ENCODE measurements at regions of chr19 and their contacts with region 1.

Region 1: GRCh38 chr19:12333162-12334159 is at the start of gene ZNF563:
- DNase-seq: peak; percentile 96 to 99 (median 98)
- ATAC-seq: peak; percentile 92
- H3K4me3 ChIP-seq: peak within 1 kb of the TSS; percentile 86
- H3K4me3 Mint-ChIP-seq: peak within 1 kb of the TSS; percentile 100
- H3K27ac ChIP-seq: peak within 1 kb of the TSS; percentile 84 to 90
- H3K27ac Mint-ChIP-seq: peak within 1 kb of the TSS; percentile 96
- H3K4me1 ChIP-seq: peaks cover 25% of the 10 kb centered on the region
- H3K4me1 Mint-ChIP-seq: peaks cover 47% of the 10 kb centered on the region
- H3K27me3 ChIP-seq: no peaks in the 10 kb centered on the region
- H3K27me3 Mint-ChIP-seq: no peaks in the 10 kb centered on the region
- CTCF ChIP-seq: no peak
- total RNA-seq, gene ZNF563: 4.5 to 5.1 TPM

Region 2: DNA sequence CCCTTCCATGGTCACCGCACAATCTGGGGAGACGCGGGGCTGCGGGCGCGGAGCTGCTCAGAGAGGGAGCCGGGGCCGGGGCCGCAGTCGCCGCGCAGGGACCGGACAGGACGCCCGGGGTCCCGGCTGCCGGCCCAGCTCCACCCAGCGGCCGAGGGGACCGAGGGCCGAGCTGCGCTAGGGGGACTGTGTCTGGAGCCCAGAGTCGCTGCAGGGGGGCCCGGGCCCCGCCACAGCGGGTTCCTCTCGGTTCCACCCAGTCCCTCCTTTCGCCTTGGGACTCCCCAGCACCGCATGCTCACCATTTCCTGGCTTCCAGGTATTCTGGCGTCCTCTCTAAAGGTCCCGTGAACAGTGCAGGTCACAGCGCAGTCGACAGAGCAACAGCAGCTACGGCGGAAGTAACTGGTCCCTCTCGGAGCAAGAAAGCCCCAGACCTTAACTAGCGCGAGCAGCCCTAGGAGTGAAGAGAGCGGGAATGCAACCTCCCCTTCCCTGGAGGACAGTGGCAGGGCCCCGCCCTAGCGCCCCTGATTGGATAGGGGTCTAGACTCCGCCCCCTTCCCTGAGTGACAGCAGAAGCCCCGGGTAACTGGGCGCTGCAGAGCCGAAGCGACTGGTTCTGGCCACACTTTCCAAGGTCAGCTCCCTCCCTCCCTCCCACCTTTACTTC is 280.8 kb before region 1 on chr19 and contains the start of gene ZNF878:
- CTCF ChIA-PET with region 1: no interaction called
- POLR2A ChIA-PET with region 1: no interaction called
- intact Hi-C with region 1: no loop called
- DNase-seq: peak in 12 of 14 experiments; percentile 15 to 68 (median 30)
- ATAC-seq: peak; percentile 71
- H3K4me3 ChIP-seq: peak within 1 kb of the TSS; percentile 60
- H3K4me3 Mint-ChIP-seq: peak within 1 kb of the TSS; percentile 90
- H3K27ac ChIP-seq: no peak within 1 kb of the TSS
- H3K27ac Mint-ChIP-seq: no peak within 1 kb of the TSS
- H3K4me1 ChIP-seq: peaks cover 16% of the 10 kb centered on the region
- H3K4me1 Mint-ChIP-seq: peaks cover 17% of the 10 kb centered on the region
- H3K27me3 ChIP-seq: peaks cover 0 to 7% of the 10 kb centered on the region in 2 experiments
- H3K27me3 Mint-ChIP-seq: peaks cover 34% of the 10 kb centered on the region
- CTCF ChIP-seq: no peak
- total RNA-seq, gene ZNF878: not detected

Region 3: DNA sequence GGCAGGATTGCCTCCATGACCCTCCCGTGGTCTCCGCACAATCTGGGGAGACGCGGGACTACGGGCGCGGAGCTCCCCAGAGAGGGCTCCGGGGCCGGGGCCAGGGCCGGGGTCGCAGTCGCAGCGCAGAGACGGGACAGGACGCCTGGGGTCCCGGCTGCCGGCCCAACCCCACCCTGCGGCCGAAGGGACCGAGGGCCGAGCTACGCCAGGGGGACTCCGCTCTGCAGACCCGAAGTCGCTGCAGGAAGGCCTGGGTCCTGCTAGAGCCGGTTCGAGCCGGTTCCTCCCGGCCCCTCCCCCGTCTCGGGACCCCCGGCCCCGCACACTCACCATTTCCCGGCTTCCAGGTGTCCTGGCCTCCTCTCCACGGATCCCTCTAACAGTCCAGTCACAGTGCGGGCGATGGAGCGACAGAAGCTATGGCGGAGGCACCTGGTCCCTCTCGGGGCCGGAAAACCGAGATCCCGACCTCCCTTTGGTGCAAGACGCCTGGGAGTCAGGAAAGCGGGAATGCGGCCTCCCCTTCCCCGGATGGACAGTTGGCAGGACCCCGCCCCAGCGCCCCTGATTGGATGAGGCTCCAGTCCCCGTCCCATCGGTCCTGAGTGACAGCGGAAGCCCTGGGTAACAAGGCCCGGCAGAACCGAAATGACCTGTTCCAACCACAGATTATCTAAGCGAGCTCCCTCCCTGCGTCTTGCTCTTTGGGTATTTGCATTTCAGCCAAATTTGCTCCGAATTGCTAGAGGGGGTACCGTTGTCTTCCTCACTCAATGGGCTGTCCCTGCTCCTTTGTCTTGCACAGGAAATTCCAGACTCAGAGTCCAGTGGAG is 177.0 kb before region 1 on chr19 and contains the start of gene ZNF625:
- CTCF ChIA-PET with region 1: no interaction called
- POLR2A ChIA-PET with region 1: interaction called, 36 read pairs
- intact Hi-C with region 1: no loop called
- DNase-seq: peak in 5 of 14 experiments; percentile 22 to 40 (median 32)
- ATAC-seq: peak; percentile 37
- H3K4me3 ChIP-seq: peak within 1 kb of the TSS; percentile 64
- H3K4me3 Mint-ChIP-seq: peak within 1 kb of the TSS; percentile 82
- H3K27ac ChIP-seq: no peak within 1 kb of the TSS
- H3K27ac Mint-ChIP-seq: peak within 1 kb of the TSS; percentile 33
- H3K4me1 ChIP-seq: peaks cover 36% of the 10 kb centered on the region
- H3K4me1 Mint-ChIP-seq: peaks cover 23% of the 10 kb centered on the region
- H3K27me3 ChIP-seq: peaks cover 0 to 7% of the 10 kb centered on the region in 2 experiments
- H3K27me3 Mint-ChIP-seq: no peaks in the 10 kb centered on the region
- CTCF ChIP-seq: no peak
- total RNA-seq, gene ZNF625: 0.56 to 0.85 TPM

Region 4: GRCh38 chr19:12202250-12202649 is 131.2 kb before region 1 on chr19:
- CTCF ChIA-PET with region 1: no interaction called
- POLR2A ChIA-PET with region 1: no interaction called
- intact Hi-C with region 1: loop called (anchors 5 kb)
- DNase-seq: peak; percentile 44 to 79 (median 60)
- ATAC-seq: peak; percentile 91
- H3K4me3 ChIP-seq: no peak overlapping the region
- H3K4me3 Mint-ChIP-seq: peak overlapping the region; percentile 49
- H3K27ac ChIP-seq: no peak overlapping the region
- H3K27ac Mint-ChIP-seq: peak overlapping the region; percentile 51
- H3K4me1 ChIP-seq: peaks cover 15% of the 10 kb centered on the region
- H3K4me1 Mint-ChIP-seq: peaks cover 47% of the 10 kb centered on the region
- H3K27me3 ChIP-seq: no peaks in the 10 kb centered on the region
- H3K27me3 Mint-ChIP-seq: no peaks in the 10 kb centered on the region
- CTCF ChIP-seq: peak; percentile 71

Region 5: GRCh38 chr19:12237143-12237839 is 96.2 kb before region 1 on chr19:
- CTCF ChIA-PET with region 1: no interaction called
- POLR2A ChIA-PET with region 1: no interaction called
- intact Hi-C with region 1: no loop called
- DNase-seq: peak in 1 of 14 experiments; percentile 9
- ATAC-seq: no peak
- H3K4me3 ChIP-seq: no peak overlapping the region
- H3K4me3 Mint-ChIP-seq: no peak overlapping the region
- H3K27ac ChIP-seq: no peak overlapping the region
- H3K27ac Mint-ChIP-seq: no peak overlapping the region
- H3K4me1 ChIP-seq: no peaks in the 10 kb centered on the region
- H3K4me1 Mint-ChIP-seq: no peaks in the 10 kb centered on the region
- H3K27me3 ChIP-seq: no peaks in the 10 kb centered on the region
- H3K27me3 Mint-ChIP-seq: no peaks in the 10 kb centered on the region
- CTCF ChIP-seq: no peak

Region 6: DNA sequence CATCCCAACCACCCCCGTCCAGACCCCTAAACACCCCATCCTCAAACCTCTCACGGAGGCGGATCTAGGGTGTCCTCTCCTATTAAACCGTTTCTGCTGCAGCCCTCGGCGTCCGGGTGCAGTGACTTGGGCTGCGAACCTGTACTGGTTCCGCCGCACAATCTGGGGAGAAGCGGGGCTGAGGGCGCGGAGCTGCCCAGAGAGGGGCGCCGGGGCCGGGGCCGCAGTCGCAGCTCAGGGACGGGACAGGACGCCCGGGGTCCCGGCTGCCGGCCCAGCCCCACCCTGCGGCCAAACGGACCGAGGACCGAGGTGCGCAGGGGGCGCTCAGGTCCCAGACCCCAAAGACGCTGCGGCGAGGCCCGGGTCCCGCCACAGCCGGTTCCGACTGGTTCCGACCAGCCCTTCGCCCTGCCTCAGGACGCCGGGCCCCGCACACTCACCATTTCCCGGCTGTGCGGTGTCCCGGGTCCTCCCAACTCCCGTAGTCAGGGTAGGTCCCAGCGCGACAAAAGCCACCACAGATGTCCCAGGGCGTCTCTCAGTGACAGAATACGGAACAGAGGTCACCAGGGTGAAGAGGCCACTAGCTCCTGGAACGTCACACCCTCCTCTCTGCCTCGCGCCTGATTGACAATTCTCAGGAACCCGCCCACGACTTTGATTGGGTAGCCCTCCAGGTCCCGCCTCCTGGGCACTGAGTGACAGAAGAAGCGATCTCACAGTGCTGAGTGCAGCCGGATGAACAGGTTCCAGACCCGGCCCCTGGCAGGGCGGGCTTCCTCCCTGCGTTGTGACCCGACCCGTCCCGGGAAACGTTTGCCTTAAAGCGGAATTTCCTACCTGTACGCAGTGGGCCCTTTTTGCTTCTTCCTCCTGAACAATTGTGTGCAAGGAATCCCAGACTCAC is 39.0 kb before region 1 on chr19 and contains the start of gene ZNF44:
- CTCF ChIA-PET with region 1: no interaction called
- POLR2A ChIA-PET with region 1: interaction called, 64 read pairs
- intact Hi-C with region 1: loop called (anchors 1 kb)
- DNase-seq: peak; percentile 88 to 99 (median 94)
- ATAC-seq: peak; percentile 95
- H3K4me3 ChIP-seq: peak within 1 kb of the TSS; percentile 96
- H3K4me3 Mint-ChIP-seq: peak within 1 kb of the TSS; percentile 98
- H3K27ac ChIP-seq: peak within 1 kb of the TSS; percentile 78 to 92
- H3K27ac Mint-ChIP-seq: peak within 1 kb of the TSS; percentile 99
- H3K4me1 ChIP-seq: peaks cover 46% of the 10 kb centered on the region
- H3K4me1 Mint-ChIP-seq: peaks cover 41% of the 10 kb centered on the region
- H3K27me3 ChIP-seq: no peaks in the 10 kb centered on the region
- H3K27me3 Mint-ChIP-seq: no peaks in the 10 kb centered on the region
- CTCF ChIP-seq: no peak
- total RNA-seq, gene ZNF44: 30.4 to 31.4 TPM

Region 7: GRCh38 chr19:12353375-12353774 is 19.9 kb after region 1 on chr19:
- CTCF ChIA-PET with region 1: no interaction called
- POLR2A ChIA-PET with region 1: no interaction called
- intact Hi-C with region 1: no loop called
- DNase-seq: no peak
- ATAC-seq: no peak
- H3K4me3 ChIP-seq: no peak overlapping the region
- H3K4me3 Mint-ChIP-seq: no peak overlapping the region
- H3K27ac ChIP-seq: no peak overlapping the region
- H3K27ac Mint-ChIP-seq: no peak overlapping the region
- H3K4me1 ChIP-seq: no peaks in the 10 kb centered on the region
- H3K4me1 Mint-ChIP-seq: no peaks in the 10 kb centered on the region
- H3K27me3 ChIP-seq: no peaks in the 10 kb centered on the region
- H3K27me3 Mint-ChIP-seq: no peaks in the 10 kb centered on the region
- CTCF ChIP-seq: no peak

Region 8: GRCh38 chr19:12374026-12374425 is 40.6 kb after region 1 on chr19:
- CTCF ChIA-PET with region 1: no interaction called
- POLR2A ChIA-PET with region 1: no interaction called
- intact Hi-C with region 1: no loop called
- DNase-seq: no peak
- ATAC-seq: no peak
- H3K4me3 ChIP-seq: no peak overlapping the region
- H3K4me3 Mint-ChIP-seq: no peak overlapping the region
- H3K27ac ChIP-seq: no peak overlapping the region
- H3K27ac Mint-ChIP-seq: no peak overlapping the region
- H3K4me1 ChIP-seq: no peaks in the 10 kb centered on the region
- H3K4me1 Mint-ChIP-seq: no peaks in the 10 kb centered on the region
- H3K27me3 ChIP-seq: no peaks in the 10 kb centered on the region
- H3K27me3 Mint-ChIP-seq: no peaks in the 10 kb centered on the region
- CTCF ChIP-seq: no peak

Region 9: GRCh38 chr19:12440541-12441316 is 107.3 kb after region 1 on chr19 and contains the start of gene ZNF443:
- CTCF ChIA-PET with region 1: no interaction called
- POLR2A ChIA-PET with region 1: interaction called, 14 read pairs
- intact Hi-C with region 1: no loop called
- DNase-seq: peak; percentile 96 to 99 (median 98)
- ATAC-seq: peak; percentile 98
- H3K4me3 ChIP-seq: peak within 1 kb of the TSS; percentile 85
- H3K4me3 Mint-ChIP-seq: peak within 1 kb of the TSS; percentile 100
- H3K27ac ChIP-seq: peak within 1 kb of the TSS in 1 of 2 donors; percentile 46
- H3K27ac Mint-ChIP-seq: peak within 1 kb of the TSS; percentile 86
- H3K4me1 ChIP-seq: peaks cover 17% of the 10 kb centered on the region
- H3K4me1 Mint-ChIP-seq: peaks cover 13% of the 10 kb centered on the region
- H3K27me3 ChIP-seq: no peaks in the 10 kb centered on the region
- H3K27me3 Mint-ChIP-seq: no peaks in the 10 kb centered on the region
- CTCF ChIP-seq: no peak
- total RNA-seq, gene ZNF443: 1.8 to 2.0 TPM